Activated CD4-positive, alpha-beta T cell treated with anti-CD3 and anti-CD28 coated beads for 36 hours (primary cell): ENCODE measurements at regions of chr17 and their contacts with region 1.

Region 1: GRCh38 chr17:8057691-8058114 is 18.8 kb downstream of the ALOX15B start:
- DNase-seq: peak; percentile 63
- ATAC-seq: peak; percentile 89
- H3K4me3 Mint-ChIP-seq: no peak overlapping the region
- H3K27ac Mint-ChIP-seq: no peak overlapping the region
- H3K4me1 Mint-ChIP-seq: peaks cover 4% of the 10 kb centered on the region
- H3K27me3 Mint-ChIP-seq: peaks cover 47% of the 10 kb centered on the region

Region 2: GRCh38 chr17:7606280-7606679 is 451.4 kb before region 1 on chr17:
- CTCF ChIA-PET with region 1: no interaction called
- POLR2A ChIA-PET with region 1: no interaction called
- intact Hi-C with region 1: no loop called
- DNase-seq: no peak
- ATAC-seq: peak; percentile 49
- H3K4me3 Mint-ChIP-seq: no peak overlapping the region
- H3K27ac Mint-ChIP-seq: no peak overlapping the region
- H3K4me1 Mint-ChIP-seq: peaks cover 18% of the 10 kb centered on the region
- H3K27me3 Mint-ChIP-seq: no peaks in the 10 kb centered on the region

Region 3: GRCh38 chr17:7825206-7825990 is 232.3 kb before region 1 on chr17:
- CTCF ChIA-PET with region 1: interaction called, 6 read pairs
- POLR2A ChIA-PET with region 1: interaction called, 4 read pairs
- intact Hi-C with region 1: loop called in 1 of 2 experiments (anchors 5 kb)
- DNase-seq: no peak
- ATAC-seq: peak; percentile 72
- H3K4me3 Mint-ChIP-seq: no peak overlapping the region
- H3K27ac Mint-ChIP-seq: no peak overlapping the region
- H3K4me1 Mint-ChIP-seq: peaks cover 3% of the 10 kb centered on the region
- H3K27me3 Mint-ChIP-seq: no peaks in the 10 kb centered on the region

Region 4: GRCh38 chr17:7989781-7990655 is 67.7 kb before region 1 on chr17:
- CTCF ChIA-PET with region 1: interaction called, 35 read pairs
- POLR2A ChIA-PET with region 1: no interaction called
- intact Hi-C with region 1: loop called (anchors 1 kb)
- DNase-seq: peak; percentile 96
- ATAC-seq: peak; percentile 93
- H3K4me3 Mint-ChIP-seq: peak overlapping the region; percentile 73
- H3K27ac Mint-ChIP-seq: peak overlapping the region; percentile 87
- H3K4me1 Mint-ChIP-seq: peaks cover 14% of the 10 kb centered on the region
- H3K27me3 Mint-ChIP-seq: peaks cover 5% of the 10 kb centered on the region

Region 5: GRCh38 chr17:8073627-8074484 is 16.2 kb after region 1 on chr17:
- CTCF ChIA-PET with region 1: interaction called, 315 read pairs
- POLR2A ChIA-PET with region 1: interaction called, 3 read pairs
- intact Hi-C with region 1: loop called (anchors 1 kb)
- DNase-seq: peak; percentile 94
- ATAC-seq: peak; percentile 93
- H3K4me3 Mint-ChIP-seq: peak overlapping the region; percentile 66
- H3K27ac Mint-ChIP-seq: peak overlapping the region; percentile 66
- H3K4me1 Mint-ChIP-seq: peaks cover 20% of the 10 kb centered on the region
- H3K27me3 Mint-ChIP-seq: peaks cover 31% of the 10 kb centered on the region

Region 6: GRCh38 chr17:8109661-8110464 is 52.2 kb after region 1 on chr17:
- CTCF ChIA-PET with region 1: interaction called, 155 read pairs
- POLR2A ChIA-PET with region 1: no interaction called
- intact Hi-C with region 1: loop called (anchors 1 kb)
- DNase-seq: peak; percentile 90
- ATAC-seq: peak; percentile 97
- H3K4me3 Mint-ChIP-seq: peak overlapping the region; percentile 34
- H3K27ac Mint-ChIP-seq: no peak overlapping the region
- H3K4me1 Mint-ChIP-seq: peaks cover 5% of the 10 kb centered on the region
- H3K27me3 Mint-ChIP-seq: peaks cover 19% of the 10 kb centered on the region

Region 7: DNA sequence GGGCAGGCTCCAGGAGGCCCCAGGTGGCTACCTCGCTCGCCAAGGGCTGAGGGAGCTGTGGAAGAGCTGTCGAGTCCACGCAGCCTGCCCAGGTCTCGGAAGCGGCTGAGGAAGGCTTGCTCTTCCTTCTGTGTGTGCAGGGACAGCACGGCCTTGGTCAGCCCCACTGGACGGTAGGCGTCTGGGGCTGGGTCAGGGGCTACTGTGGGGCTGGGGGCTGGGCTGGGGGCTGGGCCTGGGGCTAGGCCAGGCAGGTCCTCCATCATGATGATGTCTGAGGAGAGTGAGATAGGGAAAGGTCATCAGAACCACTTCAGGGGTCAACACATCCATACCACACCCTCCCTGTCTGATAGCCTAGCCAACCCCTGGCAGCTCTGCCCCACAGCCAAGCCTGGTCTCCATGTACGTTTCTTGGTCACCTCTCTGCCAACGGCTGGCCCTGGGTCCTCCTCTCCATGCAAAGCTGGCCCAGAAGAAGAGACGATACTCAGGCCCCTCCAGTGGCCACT is 87.1 kb after region 1 on chr17:
- CTCF ChIA-PET with region 1: no interaction called
- POLR2A ChIA-PET with region 1: no interaction called
- intact Hi-C with region 1: no loop called
- DNase-seq: no peak
- ATAC-seq: no peak
- H3K4me3 Mint-ChIP-seq: no peak overlapping the region
- H3K27ac Mint-ChIP-seq: no peak overlapping the region
- H3K4me1 Mint-ChIP-seq: peaks cover 3% of the 10 kb centered on the region
- H3K27me3 Mint-ChIP-seq: no peaks in the 10 kb centered on the region

Region 8: GRCh38 chr17:8621585-8621984 is 563.9 kb after region 1 on chr17:
- CTCF ChIA-PET with region 1: no interaction called
- POLR2A ChIA-PET with region 1: no interaction called
- intact Hi-C with region 1: no loop called
- DNase-seq: peak; percentile 22
- ATAC-seq: peak; percentile 74
- H3K4me3 Mint-ChIP-seq: no peak overlapping the region
- H3K27ac Mint-ChIP-seq: no peak overlapping the region
- H3K4me1 Mint-ChIP-seq: peaks cover 16% of the 10 kb centered on the region
- H3K27me3 Mint-ChIP-seq: peaks cover 16% of the 10 kb centered on the region